PC-9 (cell line): ENCODE measurements at regions of chr17 and their contacts with region 1.

Region 1: DNA sequence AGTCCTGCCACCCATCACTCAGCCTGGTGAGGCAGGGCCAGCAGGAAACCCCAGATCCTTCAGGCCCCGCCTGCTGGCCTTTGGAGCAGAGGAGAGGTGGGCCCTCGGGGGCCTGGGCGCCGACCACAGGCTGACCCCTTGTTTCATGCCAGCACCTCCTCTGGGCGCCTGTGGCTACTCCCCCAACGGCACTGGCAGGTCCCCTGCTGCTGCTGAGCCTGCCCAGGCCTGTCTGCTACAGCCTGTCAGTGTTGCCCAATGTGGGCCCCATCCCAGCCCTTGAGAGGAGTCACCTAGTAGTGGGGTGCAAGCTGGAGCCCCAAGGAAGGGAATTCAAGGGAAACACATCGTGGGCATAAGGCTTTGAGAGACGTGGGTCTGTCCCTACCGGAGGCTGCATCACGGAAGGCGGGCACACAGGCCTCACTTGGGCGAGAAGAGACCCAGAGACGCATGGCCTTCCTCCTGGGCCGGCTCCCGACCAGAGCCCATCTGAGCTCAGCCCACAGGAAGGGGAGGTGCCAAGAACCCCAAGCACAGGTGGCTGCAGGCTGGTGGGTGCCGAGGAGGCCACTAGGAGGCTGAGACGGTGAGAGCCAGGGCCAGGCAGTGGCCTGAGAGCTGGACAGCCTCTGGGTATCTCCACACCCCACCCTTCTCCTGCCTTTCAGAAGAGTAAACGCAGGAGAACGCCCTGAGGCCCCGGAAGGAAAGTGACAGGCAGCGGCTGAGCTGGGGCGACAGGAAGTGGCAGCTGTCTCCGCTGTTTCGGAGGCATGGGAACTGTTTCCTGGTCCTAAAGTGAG is 8.0 kb upstream of the FASN start:
- DNase-seq: peak; percentile 94 to 97
- H3K4me3 ChIP-seq: peak overlapping the region; percentile 54
- H3K27ac ChIP-seq: peak overlapping the region; percentile 71
- H3K4me1 ChIP-seq: peaks cover 70% of the 10 kb centered on the region
- H3K27me3 ChIP-seq: no peaks in the 10 kb centered on the region
- CTCF ChIP-seq: peak; percentile 53

Region 2: DNA sequence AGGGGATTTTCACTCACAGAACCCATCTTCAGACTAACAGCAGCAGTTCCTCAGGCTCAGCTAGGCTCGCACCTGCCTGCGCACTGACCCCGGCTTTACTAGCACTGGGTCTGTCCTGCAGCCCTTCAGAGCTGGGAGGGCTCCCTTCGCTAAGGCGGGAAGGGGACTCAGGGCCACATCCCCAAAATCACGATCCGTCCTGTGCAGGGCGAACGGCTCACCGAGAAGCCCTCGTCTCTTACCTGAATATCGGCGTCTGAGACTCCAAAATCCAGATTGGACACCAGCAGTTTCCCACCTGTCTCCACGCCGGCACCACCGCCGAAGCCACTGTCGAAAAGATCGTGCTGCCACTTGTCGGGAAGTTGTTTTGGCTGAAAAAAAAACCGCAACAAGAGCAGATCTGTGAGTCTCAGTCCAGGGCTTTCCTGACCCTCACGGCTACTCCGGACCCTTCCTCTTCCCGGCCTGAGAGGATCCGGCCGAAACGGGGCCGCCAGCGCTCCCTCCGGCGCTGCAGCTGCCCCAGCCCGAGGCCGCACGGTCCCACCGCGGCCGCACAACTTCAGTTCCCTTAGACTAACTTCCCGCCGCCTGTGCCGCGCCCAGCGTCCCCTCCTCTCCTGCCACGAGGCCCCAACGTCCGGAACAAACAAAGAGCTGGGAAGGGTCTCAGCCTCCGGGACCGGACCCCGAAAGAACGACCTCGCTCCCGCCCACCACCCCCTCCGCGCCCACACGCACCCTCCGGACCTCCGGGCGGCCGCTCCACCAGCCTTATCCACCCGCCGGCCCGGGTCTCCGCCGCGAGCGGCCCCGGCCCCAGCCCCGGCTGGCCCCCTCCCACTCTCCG is 215.4 kb before region 1 on chr17:
- CTCF ChIA-PET with region 1: no interaction called
- POLR2A ChIA-PET with region 1: no interaction called
- intact Hi-C with region 1: loop called (anchors 10 kb)
- DNase-seq: no peak
- H3K4me3 ChIP-seq: peak overlapping the region; percentile 66
- H3K27ac ChIP-seq: no peak overlapping the region
- H3K4me1 ChIP-seq: peaks cover 21% of the 10 kb centered on the region
- H3K27me3 ChIP-seq: no peaks in the 10 kb centered on the region
- CTCF ChIP-seq: no peak

Region 3: DNA sequence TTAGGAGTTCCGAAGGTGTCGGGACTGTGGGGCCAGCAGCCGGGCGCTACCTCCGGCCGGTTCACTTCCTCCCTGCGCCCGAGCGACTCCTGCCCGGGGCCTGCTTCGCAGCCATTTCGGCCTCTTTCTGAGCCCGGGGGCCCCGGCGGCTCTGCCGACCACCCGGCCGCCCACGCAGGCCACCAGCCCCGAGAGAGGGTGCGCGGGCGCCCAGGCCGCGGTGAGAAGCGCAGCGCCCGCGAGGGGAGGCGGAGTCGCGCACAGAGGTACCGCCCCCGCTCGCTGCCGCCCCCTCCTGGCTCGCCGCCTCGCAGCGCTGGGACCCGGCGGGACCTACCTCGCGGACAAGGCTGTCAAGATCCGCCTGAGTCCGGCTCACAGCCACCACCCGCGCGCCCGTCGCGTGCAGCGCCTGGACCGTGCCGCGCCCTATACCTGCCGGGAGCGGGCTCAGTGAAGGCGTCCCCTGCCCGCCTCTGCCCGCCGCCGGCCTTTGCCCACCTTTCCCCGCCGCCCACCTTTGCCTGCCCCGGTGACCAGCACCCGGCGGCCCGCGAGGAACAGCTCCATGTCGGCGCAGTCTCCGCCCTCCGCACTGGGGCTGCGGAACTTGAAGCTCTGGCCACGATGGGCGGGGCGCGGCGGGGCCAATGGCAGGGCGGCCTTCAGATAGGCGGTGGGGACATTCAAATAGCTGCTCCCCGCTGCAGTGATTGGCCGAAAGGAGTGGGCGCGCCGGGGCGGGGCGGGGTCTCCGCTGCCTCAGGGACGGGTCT is 68.8 kb before region 1 on chr17 and contains the start of gene DCXR:
- CTCF ChIA-PET with region 1: interaction called, 5 read pairs
- POLR2A ChIA-PET with region 1: interaction called, 6 read pairs
- intact Hi-C with region 1: loop called (anchors 2 kb)
- DNase-seq: peak; percentile 85 to 98
- H3K4me3 ChIP-seq: peak within 1 kb of the TSS; percentile 66
- H3K27ac ChIP-seq: no peak within 1 kb of the TSS
- H3K4me1 ChIP-seq: 0 out of 2 replicates have a peak, but pooled peaks cover 6% of the 10 kb centered on the region
- H3K27me3 ChIP-seq: no peaks in the 10 kb centered on the region
- CTCF ChIP-seq: peak; percentile 61
- total RNA-seq, gene DCXR: 120 and 129 TPM in 2 replicates

Region 4: DNA sequence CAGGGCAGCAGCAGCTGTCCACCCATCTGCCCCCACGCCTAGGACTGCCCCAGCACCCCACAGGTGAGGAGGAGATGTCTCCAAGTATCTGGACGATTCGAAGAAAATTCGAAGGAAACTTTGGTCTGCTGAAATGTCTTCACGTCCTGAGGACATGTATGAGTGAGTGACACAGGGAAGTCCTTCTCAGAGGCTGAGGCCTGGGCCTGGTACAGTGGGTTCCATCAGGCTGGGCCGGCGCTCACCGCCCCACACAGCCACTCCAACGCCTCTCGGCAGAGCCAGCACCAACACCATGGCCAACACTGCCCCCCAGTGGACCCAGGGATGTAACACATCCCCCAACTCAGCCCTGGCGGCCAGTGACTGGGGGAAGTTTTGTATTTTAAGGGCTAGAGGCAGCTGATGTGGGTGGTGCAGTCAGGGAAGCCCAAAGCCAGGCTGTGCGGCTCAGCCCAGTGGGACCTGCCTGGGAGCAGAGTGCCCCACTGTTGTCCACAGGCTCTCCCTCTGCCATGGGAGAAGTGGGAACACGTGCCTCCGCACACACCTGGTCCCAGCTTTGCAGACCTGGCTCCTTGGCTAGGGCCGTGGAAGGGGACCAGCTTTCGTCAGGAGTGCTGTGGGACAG is 47.8 kb after region 1 on chr17:
- CTCF ChIA-PET with region 1: no interaction called
- POLR2A ChIA-PET with region 1: interaction called, 6 read pairs
- intact Hi-C with region 1: loop called (anchors 2 kb)
- DNase-seq: peak; percentile 39 to 82
- H3K4me3 ChIP-seq: no peak overlapping the region
- H3K27ac ChIP-seq: no peak overlapping the region
- H3K4me1 ChIP-seq: no peaks in the 10 kb centered on the region
- H3K27me3 ChIP-seq: no peaks in the 10 kb centered on the region
- CTCF ChIP-seq: peak; percentile 81

Region 5: DNA sequence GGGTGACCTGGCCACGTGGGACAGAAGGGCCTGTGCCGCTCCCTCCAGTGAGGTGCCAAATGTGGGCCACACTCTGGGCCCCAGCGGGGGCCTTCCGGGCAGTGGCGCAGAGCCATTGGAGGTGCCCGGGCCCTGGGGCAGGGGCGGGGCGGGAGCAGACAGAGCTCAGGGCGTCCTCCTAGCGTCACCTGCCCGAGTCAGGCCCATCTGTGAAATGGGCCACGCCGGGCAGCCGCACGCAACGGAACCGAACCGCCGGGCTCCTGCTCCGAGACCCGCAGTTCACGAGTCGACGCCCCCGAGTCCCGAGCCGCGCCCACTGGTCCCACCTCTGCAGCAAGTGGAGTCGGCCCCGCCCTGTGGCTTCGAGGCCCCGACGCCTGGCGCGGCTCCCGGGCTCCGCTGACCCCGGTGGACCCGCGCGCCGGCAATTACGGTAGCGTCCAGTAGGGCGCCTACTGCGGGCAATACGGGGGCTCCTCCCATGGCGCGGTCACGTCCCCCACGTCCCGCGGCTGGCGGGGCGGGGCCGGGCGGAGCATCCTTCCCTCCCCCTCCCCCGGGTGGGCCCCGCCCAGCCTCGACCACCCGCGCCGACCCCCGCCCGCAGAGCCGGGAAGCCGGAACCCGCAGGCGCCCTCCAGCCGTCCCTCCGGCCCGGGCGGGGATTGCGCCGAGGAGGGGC is 124.7 kb after region 1 on chr17:
- CTCF ChIA-PET with region 1: interaction called, 3 read pairs
- POLR2A ChIA-PET with region 1: no interaction called
- intact Hi-C with region 1: loop called (anchors 5 kb)
- DNase-seq: peak in 1 of 2 experiments; percentile 85
- H3K4me3 ChIP-seq: peak overlapping the region; percentile 72
- H3K27ac ChIP-seq: peak overlapping the region; percentile 32; the same call in 1 of the 2 replicates
- H3K4me1 ChIP-seq: peaks cover 40% of the 10 kb centered on the region
- H3K27me3 ChIP-seq: no peaks in the 10 kb centered on the region
- CTCF ChIP-seq: peak; percentile 46

Region 6: GRCh38 chr17:82332669-82333278 is 226.7 kb after region 1 on chr17:
- CTCF ChIA-PET with region 1: no interaction called
- POLR2A ChIA-PET with region 1: no interaction called
- intact Hi-C with region 1: loop called (anchors 10 kb)
- DNase-seq: peak; percentile 44 to 47
- H3K4me3 ChIP-seq: peak overlapping the region; percentile 58
- H3K27ac ChIP-seq: no peak overlapping the region
- H3K4me1 ChIP-seq: peaks cover 4% of the 10 kb centered on the region; the same call in 1 of the 2 replicates
- H3K27me3 ChIP-seq: no peaks in the 10 kb centered on the region
- CTCF ChIP-seq: no peak